ENCODE measurements at regions of chr1 and their contacts with region 1.

Region 1: DNA sequence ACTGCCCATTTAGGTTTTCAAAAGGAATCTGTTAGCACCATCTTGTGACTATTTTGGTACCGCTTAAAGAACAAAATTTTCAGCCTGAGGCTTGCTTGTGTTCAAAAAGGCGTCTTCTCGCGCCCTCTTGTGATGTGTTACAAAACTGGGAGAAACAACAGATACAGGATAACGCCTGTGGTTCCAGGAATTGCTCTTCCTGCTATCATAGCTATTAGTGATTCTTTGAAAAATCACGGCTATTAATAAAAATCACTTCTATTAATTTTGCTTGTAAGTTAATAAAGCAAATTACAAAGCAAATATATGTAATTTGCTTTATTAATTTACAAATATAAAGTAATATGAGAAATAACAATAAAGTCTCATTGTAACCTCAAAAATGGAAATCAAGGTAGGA is 82.2 kb upstream of the ABCD3 start:
- DNase-seq: no peak

Region 2: DNA sequence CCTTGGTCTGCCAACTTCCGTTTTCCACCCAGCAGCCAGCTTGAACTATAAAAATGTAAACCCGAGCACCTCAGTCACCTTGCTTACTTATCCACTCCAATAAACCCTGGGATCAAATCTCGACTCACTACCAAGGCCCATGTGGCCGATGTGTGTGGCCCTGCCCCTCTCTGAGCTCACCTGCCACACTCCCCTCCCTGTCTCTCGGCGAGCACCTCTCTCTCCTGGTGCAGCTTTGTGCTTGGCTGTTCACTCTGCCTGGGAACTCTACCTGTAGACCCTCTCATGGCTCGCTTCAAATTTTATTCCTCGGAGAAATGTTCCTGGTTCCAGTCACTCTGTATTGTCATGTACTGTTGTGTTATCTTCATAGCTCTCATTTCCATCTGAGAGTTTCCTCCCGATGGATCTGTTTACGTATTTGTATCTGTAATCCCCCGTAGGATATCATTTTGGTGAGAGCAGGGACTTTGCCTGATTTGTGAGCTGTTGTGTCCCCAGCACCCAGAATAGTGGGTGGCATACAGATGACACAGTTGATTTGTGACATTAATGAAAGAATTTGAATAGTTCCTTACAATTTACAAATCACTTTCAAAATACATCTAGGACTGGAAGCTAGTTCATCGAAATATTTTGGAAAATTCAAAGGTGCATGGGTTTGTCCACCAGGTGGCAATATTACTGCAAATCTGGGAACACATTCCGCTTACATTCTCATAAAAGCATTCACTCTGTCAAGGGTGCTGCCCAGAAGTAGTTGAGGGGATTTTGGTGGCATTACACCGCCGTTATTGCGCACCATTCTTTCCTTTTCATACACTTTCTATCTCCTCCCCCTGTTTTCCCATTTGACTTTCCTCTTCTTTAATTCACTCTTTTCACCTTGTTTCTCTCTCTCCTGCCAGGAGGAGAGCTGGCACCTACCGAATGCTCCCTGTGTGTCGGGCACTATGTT is 310.3 kb before region 1 on chr1:
- intact Hi-C with region 1: loop called (anchors 2 kb)
- DNase-seq: no peak

Region 3: DNA sequence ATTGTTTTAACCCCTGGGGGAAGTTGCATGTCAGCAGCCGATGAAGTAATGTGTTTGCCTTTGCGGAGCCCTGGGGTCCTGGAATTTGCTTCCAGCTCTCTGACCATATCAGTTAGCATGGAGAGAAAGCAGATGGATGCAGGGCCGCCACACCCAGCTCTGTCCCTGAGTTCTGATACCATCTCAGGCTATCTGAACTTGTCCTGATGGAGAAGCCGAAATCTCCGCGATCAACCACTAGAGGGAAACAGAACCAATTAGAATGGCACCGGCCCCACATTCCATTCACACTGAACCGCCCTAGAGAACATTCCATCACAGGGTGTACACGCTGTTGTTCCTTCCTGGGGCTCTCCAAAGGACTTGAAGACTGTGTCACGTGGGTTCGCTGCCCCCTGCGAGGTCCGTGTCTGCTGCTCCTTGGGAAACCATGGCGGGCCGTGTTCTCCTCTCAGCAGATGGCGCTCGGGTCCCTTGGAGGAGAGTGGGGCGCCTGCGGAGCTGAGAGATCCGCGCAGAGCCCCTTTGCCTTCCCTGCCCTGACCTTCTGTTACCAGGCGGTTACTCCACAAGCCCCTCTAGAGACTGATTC is 290.4 kb before region 1 on chr1:
- intact Hi-C with region 1: loop called in 1 of 2 experiments (anchors 5 kb)
- DNase-seq: peak; percentile 96

Region 4: DNA sequence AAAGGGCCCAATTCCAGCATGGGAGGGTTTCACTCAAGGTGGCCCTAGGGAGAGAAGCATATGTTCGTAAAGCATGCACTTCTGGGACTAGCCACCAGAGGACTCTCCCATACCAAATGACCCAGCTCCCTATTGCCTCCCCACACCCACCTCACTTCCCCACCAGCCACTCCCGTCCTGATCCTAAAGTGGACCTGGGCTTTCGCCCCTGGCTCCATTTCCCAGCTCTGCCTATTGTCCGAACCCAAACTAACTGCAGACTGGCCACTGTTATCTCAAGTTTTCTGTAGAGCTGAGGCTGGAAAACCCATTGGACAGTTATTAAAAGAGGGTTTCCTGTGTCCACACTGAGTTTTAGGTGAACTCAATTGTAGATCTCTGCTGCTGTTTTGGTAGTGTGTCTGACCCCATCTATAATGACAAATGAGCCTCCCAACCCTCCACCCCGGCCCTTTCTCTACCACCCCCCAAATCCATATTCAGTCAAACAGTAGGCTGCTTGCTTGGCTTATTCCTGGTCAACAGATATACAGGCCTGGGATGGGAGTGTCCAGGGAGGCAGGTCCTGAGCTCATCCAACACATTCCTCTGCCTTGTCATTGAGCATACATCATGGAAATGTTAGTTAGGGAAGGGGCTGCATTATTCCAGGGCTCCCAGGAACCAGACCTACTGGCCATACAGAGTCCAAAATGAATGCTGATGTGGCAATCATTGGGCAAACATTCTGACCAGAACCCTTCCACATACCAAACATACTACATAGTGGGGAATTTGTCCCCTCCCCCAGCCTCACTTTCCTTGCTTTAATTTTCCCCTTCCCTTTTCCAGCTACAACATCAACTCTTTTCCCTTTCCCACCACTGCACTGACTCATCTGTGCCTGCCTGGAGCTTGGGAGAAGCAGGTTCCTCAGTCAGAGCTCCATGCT is 274.2 kb before region 1 on chr1:
- intact Hi-C with region 1: loop called in 1 of 2 experiments (anchors 5 kb)
- DNase-seq: no peak

Region 5: DNA sequence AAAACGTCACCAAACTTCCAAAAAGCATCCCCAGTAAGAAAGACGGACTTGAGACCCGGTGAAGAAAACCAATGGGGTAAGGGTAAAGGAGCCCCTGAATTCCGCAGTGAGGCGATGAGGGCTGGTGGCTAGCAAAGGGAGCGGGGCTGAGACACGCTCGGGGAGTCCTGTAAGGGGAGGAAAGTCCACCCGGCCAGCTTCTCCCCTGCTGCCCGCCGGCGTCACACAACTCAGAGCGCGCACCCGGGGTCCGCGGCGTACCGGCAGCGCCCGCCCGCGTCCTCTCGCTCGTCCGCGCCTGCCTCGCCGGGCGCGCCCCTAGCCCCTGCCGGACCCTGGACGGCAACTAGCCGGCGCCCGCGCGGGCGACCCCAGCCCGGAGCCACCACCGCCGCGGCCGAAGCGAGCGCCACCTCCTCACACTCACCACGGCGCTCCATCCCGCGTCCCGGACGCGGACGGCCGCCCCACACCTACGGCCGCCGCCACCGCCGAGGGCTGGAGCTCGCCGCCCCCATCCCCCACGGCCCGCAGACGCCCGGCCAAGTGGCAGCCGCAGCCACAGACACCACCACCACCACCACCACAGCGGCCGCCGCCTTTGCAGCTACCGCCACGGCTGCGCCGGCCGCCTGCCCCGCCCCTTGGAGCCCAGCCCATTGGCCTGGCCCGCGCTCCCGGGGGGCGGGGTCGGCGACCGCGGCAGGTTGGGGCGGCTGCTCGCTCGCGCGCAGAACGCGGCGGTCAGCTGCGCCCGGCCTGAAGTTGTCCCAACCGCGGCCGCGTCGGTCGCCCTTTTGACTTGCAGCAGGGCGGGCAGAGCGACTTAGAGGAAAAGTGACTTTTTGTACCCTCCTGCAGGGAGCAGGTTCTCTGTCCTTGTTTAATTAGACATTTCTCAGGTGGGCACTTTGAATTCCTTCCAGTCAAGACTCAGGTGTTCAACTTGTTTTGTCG is 88.5 kb before region 1 on chr1:
- intact Hi-C with region 1: loop called (anchors 5 to 10 kb)
- DNase-seq: peak; percentile 90